Right cardiac atrium (tissue), 5 donors: ENCODE measurements at regions of chr21 and their contacts with region 1.

Region 1: DNA sequence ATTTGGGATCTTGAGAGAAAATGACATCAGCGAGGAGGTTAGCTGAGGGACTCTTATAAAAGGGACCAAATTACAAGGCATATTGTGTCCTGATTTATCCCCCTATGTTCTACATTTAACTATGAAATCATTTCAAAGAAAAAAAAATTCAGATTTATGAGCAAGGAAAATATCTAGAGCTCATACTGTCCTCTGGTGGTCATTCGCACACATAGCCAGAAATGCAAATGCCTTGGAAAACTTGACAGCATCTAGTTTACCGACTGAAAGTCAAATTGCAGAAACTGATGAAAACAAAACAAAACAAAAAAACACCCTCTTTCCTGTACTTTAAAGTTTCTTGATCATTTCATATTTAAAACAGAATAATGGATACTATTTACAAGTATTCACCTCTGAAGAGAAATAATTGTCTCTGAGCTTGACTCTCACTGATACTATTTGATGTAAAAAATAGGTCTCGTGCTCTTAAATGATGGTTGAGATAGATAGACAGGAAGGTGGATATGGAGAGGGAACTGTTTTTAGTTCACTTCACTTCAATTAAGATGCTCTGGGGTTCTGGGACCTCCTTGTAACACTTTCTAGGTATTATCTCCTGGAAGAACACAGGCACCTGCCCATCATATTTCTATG is 253.8 kb downstream of the PCP4 start:
- DNase-seq: no peak
- ATAC-seq: no peak
- H3K4me3 ChIP-seq: no peak overlapping the region
- H3K27ac ChIP-seq: no peak overlapping the region
- H3K4me1 ChIP-seq: no peaks in the 10 kb centered on the region
- H3K27me3 ChIP-seq: no peaks in the 10 kb centered on the region

Region 2: DNA sequence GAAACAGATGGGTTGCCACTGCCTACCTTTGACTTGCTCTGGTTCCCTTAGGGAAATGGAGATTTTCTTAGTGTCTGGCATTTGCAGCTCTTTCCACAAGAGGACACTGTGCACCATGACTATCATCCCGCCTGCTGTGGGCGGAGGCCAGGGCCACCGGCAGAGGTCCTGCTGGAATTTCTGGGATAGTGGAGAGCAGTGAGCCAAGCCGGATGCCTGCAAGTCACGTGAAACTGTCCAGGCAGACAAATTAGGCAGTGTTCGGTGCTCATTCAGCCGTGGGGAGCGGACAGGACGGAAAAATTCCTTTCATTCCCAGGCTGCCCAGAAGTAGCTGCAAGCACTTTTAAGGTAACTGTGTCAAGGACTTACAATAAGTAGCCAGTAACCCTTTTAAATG is 332.7 kb before region 1 on chr21:
- intact Hi-C with region 1: loop called (anchors 2 to 10 kb)
- DNase-seq: peak; percentile 80 to 89 (median 88)
- ATAC-seq: peak; percentile 99 to 100
- H3K4me3 ChIP-seq: peak overlapping the region; percentile 43
- H3K27ac ChIP-seq: no peak overlapping the region
- H3K4me1 ChIP-seq: no peaks in the 10 kb centered on the region
- H3K27me3 ChIP-seq: no peaks in the 10 kb centered on the region

Region 3: DNA sequence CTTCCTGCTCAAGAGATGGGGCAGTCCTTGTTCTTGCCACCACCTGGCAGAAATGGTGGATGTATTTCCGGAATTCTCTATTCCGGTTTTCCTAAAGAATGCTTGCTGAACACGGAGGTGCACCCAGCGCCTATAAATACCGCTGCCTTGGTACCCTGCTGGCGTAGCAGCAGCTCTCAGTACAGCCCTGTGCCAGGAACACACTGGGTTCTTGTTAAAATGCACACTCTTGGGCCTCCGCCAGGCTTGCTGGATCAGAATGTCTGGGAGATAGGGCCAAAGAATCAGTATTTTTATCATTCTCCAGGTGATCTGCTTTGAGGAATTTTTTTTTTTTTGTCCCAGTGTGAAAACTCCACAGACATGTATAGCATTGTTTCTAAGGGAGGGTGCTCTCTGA is 321.9 kb before region 1 on chr21:
- intact Hi-C with region 1: loop called in 2 of 4 experiments (anchors 10 kb)
- DNase-seq: peak in 2 of 3 donors; percentile 28 to 78
- ATAC-seq: peak; percentile 69 to 70
- H3K4me3 ChIP-seq: no peak overlapping the region
- H3K27ac ChIP-seq: peak overlapping the region; percentile 48
- H3K4me1 ChIP-seq: peaks cover 3% of the 10 kb centered on the region
- H3K27me3 ChIP-seq: no peaks in the 10 kb centered on the region

Region 4: GRCh38 chr21:39867198-39867650 is 253.8 kb before region 1 on chr21 and contains the start of gene PCP4:
- intact Hi-C with region 1: loop called in 2 of 4 experiments (anchors 5 to 10 kb)
- DNase-seq: peak in 2 of 3 donors; percentile 26 to 61
- ATAC-seq: no peak
- H3K4me3 ChIP-seq: no peak within 1 kb of the TSS
- H3K27ac ChIP-seq: no peak within 1 kb of the TSS
- H3K4me1 ChIP-seq: no peaks in the 10 kb centered on the region
- H3K27me3 ChIP-seq: no peaks in the 10 kb centered on the region
- total RNA-seq, gene PCP4: 3.9 to 7.5 (median 5.4) TPM